Heart left ventricle (tissue), 16 donors: ENCODE measurements at regions of chr12 and their contacts with region 1.

Region 1: DNA sequence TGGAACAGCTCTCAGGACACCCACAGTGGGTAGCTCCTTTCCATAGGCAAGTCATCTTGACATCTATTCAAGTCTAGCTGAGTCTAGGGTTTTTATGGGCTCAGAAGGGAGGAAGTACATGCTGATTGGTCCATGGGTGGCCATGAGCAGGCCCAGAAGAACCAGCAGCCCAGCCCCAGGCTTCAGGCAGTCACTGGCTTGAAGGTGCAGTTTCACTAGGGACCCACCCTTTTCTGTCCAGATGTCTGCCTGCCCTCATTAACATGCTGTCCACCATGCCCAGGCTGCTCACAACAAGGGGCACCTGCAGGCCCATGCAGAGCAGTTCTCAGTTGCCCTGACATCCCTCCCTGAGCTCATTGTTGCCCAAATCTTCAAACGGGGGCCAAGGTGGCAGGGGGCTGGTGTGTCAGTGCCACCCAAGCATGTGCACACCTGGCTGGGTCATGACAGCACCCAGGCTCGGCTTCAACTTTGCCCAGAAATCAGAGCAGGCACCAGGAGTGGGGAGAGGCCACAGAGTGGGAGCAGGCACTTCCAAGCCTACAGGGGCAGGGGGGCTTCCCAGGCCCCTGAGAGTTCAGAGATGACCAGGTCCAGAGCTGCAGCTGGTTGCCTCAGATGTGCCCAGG is 18.7 kb upstream of the LGR5 start:
- DNase-seq: no peak
- ATAC-seq: no peak
- H3K4me3 ChIP-seq: no peak overlapping the region
- H3K27ac ChIP-seq: no peak overlapping the region
- H3K4me1 ChIP-seq: no peaks in the 10 kb centered on the region
- H3K27me3 ChIP-seq: peaks cover 0 to 9% (median 0%) of the 10 kb centered on the region in 9 donors
- CTCF ChIP-seq: no peak
- POLR2A ChIP-seq: no peak

Region 2: DNA sequence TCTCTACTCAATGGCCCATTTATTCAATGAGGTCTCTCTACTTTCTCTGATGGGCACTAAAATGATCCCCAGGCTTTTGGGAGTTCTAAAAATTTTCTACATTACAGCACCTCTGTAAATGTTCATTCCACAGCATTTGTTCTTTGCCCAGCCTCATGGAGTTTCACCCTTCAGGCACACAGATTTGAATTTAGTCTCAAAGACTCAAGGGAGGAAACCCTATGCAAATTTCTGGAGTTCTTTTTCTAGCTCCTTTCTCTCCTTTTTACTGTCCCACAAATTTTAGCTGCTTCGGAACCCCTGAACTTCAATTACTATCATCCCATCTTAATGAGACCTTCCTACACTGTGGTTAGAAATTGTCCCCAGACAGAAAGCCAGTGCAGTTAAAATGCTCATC is 316.3 kb after region 1 on chr12:
- intact Hi-C with region 1: loop called in 1 of 10 experiments (anchors 5 kb)
- DNase-seq: no peak
- ATAC-seq: no peak
- H3K4me3 ChIP-seq: no peak overlapping the region
- H3K27ac ChIP-seq: no peak overlapping the region
- H3K4me1 ChIP-seq: no peaks in the 10 kb centered on the region
- H3K27me3 ChIP-seq: no peaks in the 10 kb centered on the region
- CTCF ChIP-seq: no peak
- POLR2A ChIP-seq: no peak